Activated CD8-positive, alpha-beta T cell treated with anti-CD3 and anti-CD28 coated beads for 36 hours (primary cell): ENCODE measurements at regions of chr5 and their contacts with region 1.

Region 1: DNA sequence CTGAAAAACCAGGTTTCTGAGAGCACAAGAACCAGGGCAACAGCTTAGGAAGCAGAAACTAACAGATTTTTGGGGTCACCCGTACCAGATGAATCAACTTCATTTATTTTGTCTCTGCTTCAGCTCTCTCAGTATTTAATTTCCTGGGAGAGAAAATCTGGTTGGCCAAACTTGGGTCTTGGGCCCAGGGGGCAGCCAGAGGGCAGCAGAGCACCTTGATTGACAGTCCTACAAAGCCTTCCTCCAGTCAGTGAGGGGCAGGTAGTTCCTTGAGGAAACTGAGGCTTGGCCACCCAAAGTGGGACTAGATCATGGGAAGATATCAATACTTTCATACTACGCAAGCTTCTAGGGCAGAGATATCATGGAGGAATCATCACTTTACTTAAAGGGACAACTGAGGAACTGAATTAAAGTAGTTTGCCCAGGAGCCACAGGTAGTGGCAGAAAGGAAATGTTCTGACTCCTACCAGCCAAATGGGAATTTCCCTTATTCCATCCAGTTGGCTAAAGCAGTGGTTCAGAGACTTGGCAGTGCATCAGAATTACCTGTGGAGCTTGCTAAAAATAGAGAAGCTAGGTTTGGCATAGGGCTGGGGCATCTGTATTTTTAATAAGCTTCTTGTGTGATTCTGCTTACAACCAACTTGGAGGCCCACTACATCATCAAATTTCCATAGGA is 21.5 kb upstream of the ARHGAP26 start:
- DNase-seq: peak; percentile 74
- ATAC-seq: peak; percentile 72
- H3K4me3 Mint-ChIP-seq: no peak overlapping the region
- H3K27ac Mint-ChIP-seq: no peak overlapping the region
- H3K4me1 Mint-ChIP-seq: peaks cover 17% of the 10 kb centered on the region
- H3K27me3 Mint-ChIP-seq: no peaks in the 10 kb centered on the region
- CTCF ChIP-seq: peak; percentile 81

Region 2: GRCh38 chr5:142720641-142721271 is 28.0 kb before region 1 on chr5:
- CTCF ChIA-PET with region 1: interaction called, 125 read pairs
- POLR2A ChIA-PET with region 1: no interaction called
- intact Hi-C with region 1: no loop called
- DNase-seq: no peak
- ATAC-seq: no peak
- H3K4me3 Mint-ChIP-seq: no peak overlapping the region
- H3K27ac Mint-ChIP-seq: no peak overlapping the region
- H3K4me1 Mint-ChIP-seq: peaks cover 6% of the 10 kb centered on the region
- H3K27me3 Mint-ChIP-seq: no peaks in the 10 kb centered on the region
- CTCF ChIP-seq: no peak

Region 3: GRCh38 chr5:142769741-142770631 is 21.3 kb after region 1 on chr5 and contains the start of gene ARHGAP26:
- CTCF ChIA-PET with region 1: interaction called, 139 read pairs
- POLR2A ChIA-PET with region 1: interaction called, 3 read pairs
- intact Hi-C with region 1: no loop called
- DNase-seq: peak; percentile 96
- ATAC-seq: peak; percentile 93
- H3K4me3 Mint-ChIP-seq: peak within 1 kb of the TSS; percentile 94
- H3K27ac Mint-ChIP-seq: peak within 1 kb of the TSS; percentile 89
- H3K4me1 Mint-ChIP-seq: peaks cover 36% of the 10 kb centered on the region
- H3K27me3 Mint-ChIP-seq: no peaks in the 10 kb centered on the region
- CTCF ChIP-seq: no peak
- total RNA-seq, gene ARHGAP26: 12.7 to 18.0 TPM

Region 4: GRCh38 chr5:142800776-142801494 is 52.2 kb after region 1 on chr5:
- CTCF ChIA-PET with region 1: interaction called, 20 read pairs
- POLR2A ChIA-PET with region 1: no interaction called
- intact Hi-C with region 1: no loop called
- DNase-seq: peak; percentile 74
- ATAC-seq: peak; percentile 78
- H3K4me3 Mint-ChIP-seq: peak overlapping the region; percentile 70
- H3K27ac Mint-ChIP-seq: peak overlapping the region; percentile 93
- H3K4me1 Mint-ChIP-seq: peaks cover 71% of the 10 kb centered on the region
- H3K27me3 Mint-ChIP-seq: no peaks in the 10 kb centered on the region
- CTCF ChIP-seq: no peak

Region 5: DNA sequence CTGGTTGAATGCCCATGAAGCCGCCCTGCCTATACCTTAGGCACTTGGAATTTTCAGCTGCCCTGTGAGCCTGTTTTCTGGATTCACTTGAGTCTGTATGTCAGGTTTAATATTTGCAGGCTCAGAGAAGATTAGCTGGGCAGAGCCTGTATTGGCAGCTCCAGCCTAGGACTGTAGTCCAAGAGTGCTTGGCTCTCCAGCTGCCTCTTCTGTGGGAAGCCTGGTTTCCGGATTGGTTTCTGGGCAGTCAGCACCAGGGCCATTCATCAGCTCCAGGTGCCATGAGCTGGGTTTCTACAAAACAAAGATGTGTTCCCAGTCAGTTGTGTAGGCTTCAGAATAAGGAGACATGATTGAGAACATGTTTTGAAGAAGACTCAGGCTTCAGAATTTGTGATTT is 111.6 kb after region 1 on chr5:
- CTCF ChIA-PET with region 1: interaction called, 45 read pairs
- POLR2A ChIA-PET with region 1: no interaction called
- intact Hi-C with region 1: no loop called
- DNase-seq: no peak
- ATAC-seq: no peak
- H3K4me3 Mint-ChIP-seq: no peak overlapping the region
- H3K27ac Mint-ChIP-seq: no peak overlapping the region
- H3K4me1 Mint-ChIP-seq: peaks cover 53% of the 10 kb centered on the region
- H3K27me3 Mint-ChIP-seq: no peaks in the 10 kb centered on the region
- CTCF ChIP-seq: no peak

Region 6: DNA sequence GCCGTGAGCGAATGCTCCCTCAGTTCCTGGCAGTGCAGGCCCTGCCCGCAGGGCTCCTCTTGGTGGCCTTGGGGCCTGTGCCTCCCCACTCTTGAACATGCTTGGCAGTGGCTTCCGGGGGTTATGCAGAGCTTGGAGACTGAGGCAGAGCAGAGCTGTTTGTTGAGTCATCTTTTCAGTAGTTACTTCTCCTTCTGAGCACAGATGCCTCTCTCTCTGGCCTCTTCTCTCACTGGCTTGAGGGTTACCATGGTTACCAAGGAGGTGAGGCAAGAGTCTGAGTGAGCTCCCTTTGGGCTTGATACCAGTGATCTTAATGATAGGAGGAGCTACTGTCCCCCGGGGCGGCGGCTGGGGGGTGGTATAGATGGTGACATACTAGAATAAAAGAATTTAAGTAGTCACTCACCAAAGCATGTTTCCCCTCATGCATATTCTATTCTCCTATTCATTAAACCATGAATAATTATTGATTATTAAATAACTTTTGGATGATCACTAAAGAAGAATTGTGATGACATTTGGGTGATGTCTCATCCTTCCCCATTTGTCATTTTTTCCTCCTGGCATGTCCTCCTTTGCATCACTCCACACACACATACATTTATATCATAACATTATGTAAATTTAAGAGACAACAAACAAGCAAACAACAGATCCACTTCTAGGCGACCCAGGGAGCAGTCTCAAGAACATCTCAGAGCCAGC is 132.5 kb after region 1 on chr5:
- CTCF ChIA-PET with region 1: interaction called, 1,012 read pairs
- POLR2A ChIA-PET with region 1: interaction called, 5 read pairs
- intact Hi-C with region 1: loop called (anchors 2 kb)
- DNase-seq: no peak
- ATAC-seq: peak; percentile 37
- H3K4me3 Mint-ChIP-seq: no peak overlapping the region
- H3K27ac Mint-ChIP-seq: no peak overlapping the region
- H3K4me1 Mint-ChIP-seq: peaks cover 8% of the 10 kb centered on the region
- H3K27me3 Mint-ChIP-seq: no peaks in the 10 kb centered on the region
- CTCF ChIP-seq: no peak

Region 7: GRCh38 chr5:142894749-142895148 is 146.0 kb after region 1 on chr5:
- CTCF ChIA-PET with region 1: interaction called, 1,012 read pairs
- POLR2A ChIA-PET with region 1: interaction called, 4 read pairs
- intact Hi-C with region 1: no loop called
- DNase-seq: no peak
- ATAC-seq: no peak
- H3K4me3 Mint-ChIP-seq: no peak overlapping the region
- H3K27ac Mint-ChIP-seq: no peak overlapping the region
- H3K4me1 Mint-ChIP-seq: peaks cover 2% of the 10 kb centered on the region
- H3K27me3 Mint-ChIP-seq: no peaks in the 10 kb centered on the region
- CTCF ChIP-seq: no peak